SK-N-SH (cell line): ENCODE measurements at regions of chr1 and their contacts with region 1.

Region 1: GRCh38 chr1:208047476-208047934 is 136.6 kb upstream of the CD34 start:
- DNase-seq: no peak
- H3K4me3 ChIP-seq: no peak overlapping the region
- H3K27ac ChIP-seq: no peak overlapping the region
- H3K4me1 ChIP-seq: peaks cover 0 to 5% of the 10 kb centered on the region in 2 experiments; a peak in 1 of 4 replicates
- H3K27me3 ChIP-seq: no peaks in the 10 kb centered on the region
- CTCF ChIP-seq: no peak
- EP300 ChIP-seq: no peak
- RAD21 ChIP-seq: no peak

Region 2: GRCh38 chr1:207997486-207998268 is 49.8 kb before region 1 on chr1:
- CTCF ChIA-PET with region 1: no interaction called
- POLR2A ChIA-PET with region 1: no interaction called
- DNase-seq: peak; percentile 74
- H3K4me3 ChIP-seq: no peak overlapping the region
- H3K27ac ChIP-seq: no peak overlapping the region
- H3K4me1 ChIP-seq: peaks cover 0 to 3% of the 10 kb centered on the region in 2 experiments; a peak in 2 of 4 replicates
- H3K27me3 ChIP-seq: no peaks in the 10 kb centered on the region
- CTCF ChIP-seq: peak; percentile 81
- EP300 ChIP-seq: no peak
- RAD21 ChIP-seq: peak; percentile 60

Region 3: GRCh38 chr1:208059409-208059995 is 12.0 kb after region 1 on chr1:
- CTCF ChIA-PET with region 1: interaction called, 25 read pairs
- POLR2A ChIA-PET with region 1: no interaction called
- DNase-seq: peak; percentile 83
- H3K4me3 ChIP-seq: no peak overlapping the region
- H3K27ac ChIP-seq: peak overlapping the region; percentile 28 to 98; a peak in 3 of 4 replicates
- H3K4me1 ChIP-seq: peaks cover 20 to 50% of the 10 kb centered on the region in 2 experiments
- H3K27me3 ChIP-seq: no peaks in the 10 kb centered on the region
- CTCF ChIP-seq: no peak
- EP300 ChIP-seq: peak in 1 of 2 experiments; percentile 98; a peak in 2 of 4 replicates
- RAD21 ChIP-seq: no peak; the same call in none of the 2 replicates